Heart left ventricle (tissue), 16 donors: ENCODE measurements at regions of chr5 and their contacts with region 1.

Region 1: DNA sequence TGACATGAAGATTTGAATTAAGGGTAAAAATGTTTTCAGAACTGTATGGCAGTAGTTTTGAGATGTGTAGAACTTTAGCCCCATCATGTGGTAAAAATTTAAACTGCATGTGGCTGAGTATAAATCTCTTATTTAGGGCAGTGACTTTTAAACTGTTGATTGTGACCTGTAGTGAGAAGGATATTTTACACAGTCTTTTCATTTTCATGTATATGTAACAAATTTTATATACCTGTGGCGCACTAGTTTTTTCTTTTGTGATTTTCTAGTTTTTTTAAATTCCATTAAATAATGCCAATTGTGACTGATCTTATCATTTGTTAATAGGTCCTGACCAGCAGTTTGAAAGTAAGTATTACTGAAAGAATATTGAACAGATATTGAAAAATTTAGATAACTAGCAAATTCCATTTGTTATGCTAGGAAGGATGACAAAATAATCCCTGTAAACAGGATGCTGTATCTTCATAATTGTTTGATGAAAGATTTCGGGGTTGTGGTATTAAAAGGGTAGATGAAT is 47.2 kb downstream of the GPBP1 start:
- DNase-seq: no peak
- ATAC-seq: peak in 3 of 4 donors; percentile 66 to 78 (median 70)
- H3K4me3 ChIP-seq: no peak overlapping the region
- H3K27ac ChIP-seq: no peak overlapping the region
- H3K4me1 ChIP-seq: peaks cover 0 to 23% (median 3%) of the 10 kb centered on the region in 12 donors
- H3K27me3 ChIP-seq: no peaks in the 10 kb centered on the region
- CTCF ChIP-seq: peak; percentile 84 to 94 (median 91)
- POLR2A ChIP-seq: no peak

Region 2: GRCh38 chr5:56264417-56265025 is 956.6 kb before region 1 on chr5:
- intact Hi-C with region 1: loop called in 2 of 10 experiments (anchors 5 kb)
- DNase-seq: no peak
- ATAC-seq: peak in 3 of 4 donors; percentile 53 to 66 (median 54)
- H3K4me3 ChIP-seq: no peak overlapping the region
- H3K27ac ChIP-seq: no peak overlapping the region
- H3K4me1 ChIP-seq: peaks cover 0 to 3% (median 0%) of the 10 kb centered on the region in 12 donors
- H3K27me3 ChIP-seq: no peaks in the 10 kb centered on the region
- CTCF ChIP-seq: peak; percentile 34 to 68 (median 52)
- POLR2A ChIP-seq: no peak

Region 3: GRCh38 chr5:56279979-56280378 is 941.1 kb before region 1 on chr5:
- intact Hi-C with region 1: loop called in 2 of 10 experiments (anchors 5 to 10 kb)
- DNase-seq: no peak
- ATAC-seq: peak in 2 of 4 donors; percentile 51 to 66
- H3K4me3 ChIP-seq: no peak overlapping the region
- H3K27ac ChIP-seq: peak overlapping the region in 2 of 12 donors; percentile 3 to 19
- H3K4me1 ChIP-seq: peaks cover 0 to 28% (median 12%) of the 10 kb centered on the region in 12 donors
- H3K27me3 ChIP-seq: no peaks in the 10 kb centered on the region
- CTCF ChIP-seq: no peak
- POLR2A ChIP-seq: no peak

Region 4: DNA sequence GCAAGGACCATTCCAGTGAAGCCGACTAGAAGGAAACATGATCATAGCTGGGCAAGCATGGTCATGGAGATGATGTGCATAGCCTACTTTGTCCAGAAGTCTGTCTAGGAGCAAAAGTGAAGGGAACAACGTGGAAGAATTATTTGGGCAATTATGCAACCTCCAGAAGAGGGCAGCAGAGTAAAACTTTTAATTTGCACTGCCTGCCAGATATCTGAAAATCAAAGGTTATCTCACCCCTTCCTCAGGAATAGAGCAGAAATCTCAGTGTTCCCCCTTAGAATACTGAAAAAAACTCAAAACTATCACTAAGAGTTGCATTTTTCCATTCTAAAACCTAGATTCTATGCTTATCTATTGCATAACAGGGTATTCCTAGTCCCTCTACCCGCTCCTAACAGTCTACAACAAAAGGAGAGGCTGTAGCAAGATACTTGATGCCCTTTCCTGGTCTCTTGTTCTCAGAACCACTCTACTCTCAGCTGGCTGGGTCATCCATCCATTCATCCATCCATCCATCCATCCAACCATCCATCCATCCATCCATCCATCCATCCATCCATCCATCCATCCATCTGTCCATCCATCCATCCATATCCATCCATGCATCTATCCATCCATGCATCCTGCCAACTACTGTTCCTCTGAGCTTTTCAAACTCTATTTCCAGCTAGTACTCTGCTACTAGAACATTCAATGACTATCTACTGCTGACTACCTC is 320.1 kb before region 1 on chr5:
- intact Hi-C with region 1: loop called (anchors 2 to 5 kb)
- DNase-seq: no peak
- ATAC-seq: peak in 3 of 4 donors; percentile 47 to 66 (median 53)
- H3K4me3 ChIP-seq: no peak overlapping the region
- H3K27ac ChIP-seq: no peak overlapping the region
- H3K4me1 ChIP-seq: peaks cover 0 to 7% (median 0%) of the 10 kb centered on the region in 12 donors
- H3K27me3 ChIP-seq: no peaks in the 10 kb centered on the region
- CTCF ChIP-seq: peak; percentile 55 to 84 (median 76)
- POLR2A ChIP-seq: no peak

Region 5: GRCh38 chr5:56951946-56952691 is 269.0 kb before region 1 on chr5 and contains the start of gene MIER3:
- intact Hi-C with region 1: loop called in 4 of 10 experiments (anchors 2 to 5 kb)
- DNase-seq: peak; percentile 85 to 88 (median 86)
- ATAC-seq: peak; percentile 79 to 98 (median 94)
- H3K4me3 ChIP-seq: peak within 1 kb of the TSS; percentile 73 to 97 (median 88)
- H3K27ac ChIP-seq: peak within 1 kb of the TSS; percentile 67 to 93 (median 84)
- H3K4me1 ChIP-seq: peaks cover 0 to 24% (median 16%) of the 10 kb centered on the region in 12 donors
- H3K27me3 ChIP-seq: peaks cover 0 to 20% (median 0%) of the 10 kb centered on the region in 9 donors
- CTCF ChIP-seq: no peak
- POLR2A ChIP-seq: no peak
- total RNA-seq, gene MIER3: 9.3 to 15.5 (median 10.8) TPM

Region 6: DNA sequence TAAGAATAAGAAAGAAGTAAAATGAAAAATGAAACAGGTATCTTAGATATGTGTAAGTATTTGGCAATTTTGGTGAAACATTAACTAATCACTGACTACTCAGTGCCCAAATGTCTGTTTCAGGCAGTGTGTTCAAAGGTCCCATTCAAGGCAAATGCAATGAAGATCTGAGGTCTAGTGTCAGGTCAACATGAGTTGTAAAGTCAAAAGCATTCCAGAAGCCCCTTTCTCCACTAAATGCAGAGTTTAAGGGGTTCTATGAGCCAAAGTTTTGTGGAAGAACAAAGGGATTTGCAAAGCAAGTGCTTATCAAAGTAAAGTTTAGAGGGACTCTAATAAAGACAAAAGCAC is 118.2 kb before region 1 on chr5:
- intact Hi-C with region 1: no loop called
- DNase-seq: no peak
- ATAC-seq: no peak
- H3K4me3 ChIP-seq: no peak overlapping the region
- H3K27ac ChIP-seq: no peak overlapping the region
- H3K4me1 ChIP-seq: no peaks in the 10 kb centered on the region
- H3K27me3 ChIP-seq: no peaks in the 10 kb centered on the region
- CTCF ChIP-seq: no peak
- POLR2A ChIP-seq: no peak

Region 7: GRCh38 chr5:57137401-57137800 is 83.7 kb before region 1 on chr5:
- intact Hi-C with region 1: loop called in 4 of 10 experiments (anchors 2 to 5 kb)
- DNase-seq: no peak
- ATAC-seq: no peak
- H3K4me3 ChIP-seq: no peak overlapping the region
- H3K27ac ChIP-seq: no peak overlapping the region
- H3K4me1 ChIP-seq: no peaks in the 10 kb centered on the region
- H3K27me3 ChIP-seq: peaks cover 0 to 2% (median 0%) of the 10 kb centered on the region in 9 donors
- CTCF ChIP-seq: no peak
- POLR2A ChIP-seq: no peak

Region 8: DNA sequence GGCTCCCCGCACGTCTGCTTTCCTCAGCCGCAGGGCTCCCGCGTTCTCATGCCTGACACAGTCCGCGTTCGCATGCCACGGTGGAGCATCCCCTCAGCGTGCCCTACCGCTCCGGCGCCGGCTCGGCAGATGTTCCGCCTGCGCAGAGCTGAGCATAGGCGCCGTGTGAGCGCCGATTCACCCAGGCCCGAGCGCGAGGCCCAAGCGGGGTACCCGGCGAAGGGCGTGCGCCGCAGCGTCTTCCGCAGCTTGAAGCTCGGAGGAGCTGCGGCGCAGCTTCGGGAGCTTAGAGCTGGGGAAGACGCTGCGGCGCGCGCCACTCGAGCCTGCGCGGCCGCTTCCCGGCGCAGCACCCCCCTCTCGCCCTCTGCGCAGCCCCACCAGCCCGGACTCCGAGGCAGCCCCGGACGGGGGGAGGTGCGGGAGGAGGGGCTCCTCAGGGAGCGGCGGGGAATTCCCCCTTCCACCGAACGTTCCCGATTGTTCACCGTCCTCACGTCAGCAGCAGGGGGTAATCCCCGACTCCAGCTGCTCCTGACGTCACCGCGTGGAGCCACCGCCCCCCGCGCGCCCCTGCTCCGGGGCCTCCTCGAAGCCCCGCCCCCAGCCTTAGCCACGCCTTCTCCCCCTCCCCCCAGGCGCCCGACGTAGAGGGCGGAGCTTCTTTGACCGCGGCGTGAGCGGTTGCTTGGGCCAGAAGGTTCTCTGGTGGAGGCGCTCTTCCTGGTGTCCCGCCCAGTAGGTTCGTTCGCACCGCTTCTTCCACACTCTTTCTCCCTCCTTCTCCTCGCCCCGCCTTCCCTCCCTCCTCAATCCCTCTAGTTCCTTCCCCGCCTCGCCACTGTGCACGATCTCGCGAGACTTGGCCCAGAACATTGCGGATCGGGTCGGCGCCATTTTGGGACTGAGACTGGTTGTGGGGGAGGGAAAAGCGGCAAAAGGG is 47.7 kb before region 1 on chr5 and contains the start of gene GPBP1:
- intact Hi-C with region 1: loop called in 2 of 10 experiments (anchors 5 kb)
- DNase-seq: peak; percentile 99
- ATAC-seq: peak; percentile 91 to 95 (median 94)
- H3K4me3 ChIP-seq: peak within 1 kb of the TSS; percentile 71 to 98 (median 89)
- H3K27ac ChIP-seq: peak within 1 kb of the TSS; percentile 94 to 100 (median 99)
- H3K4me1 ChIP-seq: peaks cover 8 to 45% (median 26%) of the 10 kb centered on the region in 12 donors
- H3K27me3 ChIP-seq: no peaks in the 10 kb centered on the region
- CTCF ChIP-seq: peak in 1 of 12 donors; percentile 3
- POLR2A ChIP-seq: peak in 1 of 2 donors; percentile 45
- total RNA-seq, gene GPBP1: 41.8 to 60.9 (median 50.1) TPM

Region 9: DNA sequence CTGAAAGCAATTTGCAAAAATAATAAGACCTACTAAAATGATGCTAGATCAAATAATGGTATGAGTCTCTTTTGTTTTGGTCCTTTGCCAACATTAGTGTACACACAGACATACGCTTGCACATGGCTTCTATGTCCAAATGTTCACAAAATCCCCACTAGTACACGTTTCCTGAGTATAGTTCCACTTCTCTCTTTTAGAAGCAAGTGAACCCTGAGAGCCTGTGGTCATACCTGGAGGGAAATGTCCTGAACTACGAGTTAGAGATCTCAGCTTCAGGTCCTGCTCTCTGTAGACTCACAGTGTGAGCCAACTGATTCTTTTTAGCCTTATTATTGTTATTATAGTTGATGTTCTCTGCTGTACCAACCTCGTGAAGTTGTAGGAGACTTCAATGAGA is 308.8 kb after region 1 on chr5:
- intact Hi-C with region 1: no loop called
- DNase-seq: no peak
- ATAC-seq: no peak
- H3K4me3 ChIP-seq: no peak overlapping the region
- H3K27ac ChIP-seq: no peak overlapping the region
- H3K4me1 ChIP-seq: peaks cover 0 to 5% (median 0%) of the 10 kb centered on the region in 12 donors
- H3K27me3 ChIP-seq: no peaks in the 10 kb centered on the region
- CTCF ChIP-seq: no peak
- POLR2A ChIP-seq: no peak